ENCODE measurements at regions of chr10 and their contacts with region 1.

Region 1: DNA sequence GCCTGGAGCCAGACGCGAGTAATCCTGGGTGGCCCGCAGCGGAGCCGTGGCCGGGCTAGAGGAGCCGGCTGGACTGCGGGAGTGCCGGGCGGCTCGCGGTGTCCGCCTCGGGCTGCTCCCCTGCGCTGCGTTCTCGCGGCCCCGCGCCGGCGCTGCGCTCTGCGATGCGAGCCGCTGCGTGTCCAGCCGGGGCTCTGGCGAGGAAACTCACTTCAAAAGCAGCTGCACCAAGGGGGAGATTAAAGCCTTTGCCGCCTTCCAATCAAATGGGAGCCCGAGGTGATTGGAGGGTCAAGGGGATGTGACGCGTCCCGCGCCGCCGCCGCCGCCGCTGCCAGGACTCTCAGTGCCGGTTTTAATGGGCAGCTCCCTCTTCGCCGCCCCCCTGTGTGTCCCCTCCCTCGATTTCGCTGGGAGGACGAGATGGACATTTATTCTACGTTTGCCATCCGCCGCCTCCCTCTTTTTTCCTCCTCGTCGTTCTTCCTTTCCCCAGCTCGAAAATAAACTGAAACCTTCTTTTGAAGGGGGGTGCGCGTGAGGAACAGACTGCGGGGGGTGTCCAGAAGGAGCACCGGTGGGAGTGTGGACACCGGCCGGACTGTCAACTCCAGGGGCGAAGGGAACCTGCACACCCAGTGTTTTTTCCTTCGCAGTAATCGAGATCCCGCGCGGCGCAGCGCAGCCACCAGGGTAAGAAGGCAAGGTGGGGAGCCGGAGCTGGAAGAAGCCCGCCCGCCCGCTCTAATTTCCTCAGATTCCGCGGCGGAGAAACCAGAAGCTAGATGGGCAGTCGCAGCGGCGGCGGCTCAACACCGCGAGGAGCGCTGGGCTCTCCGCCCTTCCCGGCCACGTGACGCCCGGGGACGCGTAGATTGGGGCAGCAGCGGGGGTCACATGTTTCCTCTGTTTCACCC is at the start of gene ZNF503:
- DNase-seq: peak; percentile 99
- total RNA-seq, gene ZNF503: 27.9 to 36.0 TPM

Region 2: DNA sequence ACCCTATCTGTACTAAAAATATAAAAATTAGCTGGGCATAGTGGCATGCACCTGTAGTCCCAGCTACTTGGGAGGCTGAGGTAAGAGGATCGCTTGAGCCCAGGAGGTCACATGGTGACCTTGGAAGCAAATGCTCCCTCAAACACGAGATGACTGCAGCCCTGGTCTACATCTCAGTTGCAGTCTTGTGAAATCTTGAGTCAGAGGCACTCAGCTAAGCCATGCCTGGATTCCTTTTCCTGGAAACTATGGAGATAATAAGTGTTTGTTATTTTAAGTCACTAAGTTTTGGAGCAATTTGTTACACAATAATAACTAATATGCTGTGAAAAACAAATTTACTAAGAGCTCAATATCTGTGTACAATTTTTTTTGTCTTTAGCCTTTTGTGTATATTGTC is 859.8 kb before region 1 on chr10:
- intact Hi-C with region 1: no loop called
- DNase-seq: no peak

Region 3: GRCh38 chr10:75272896-75273295 is 128.9 kb before region 1 on chr10:
- intact Hi-C with region 1: no loop called
- DNase-seq: no peak

Region 4: DNA sequence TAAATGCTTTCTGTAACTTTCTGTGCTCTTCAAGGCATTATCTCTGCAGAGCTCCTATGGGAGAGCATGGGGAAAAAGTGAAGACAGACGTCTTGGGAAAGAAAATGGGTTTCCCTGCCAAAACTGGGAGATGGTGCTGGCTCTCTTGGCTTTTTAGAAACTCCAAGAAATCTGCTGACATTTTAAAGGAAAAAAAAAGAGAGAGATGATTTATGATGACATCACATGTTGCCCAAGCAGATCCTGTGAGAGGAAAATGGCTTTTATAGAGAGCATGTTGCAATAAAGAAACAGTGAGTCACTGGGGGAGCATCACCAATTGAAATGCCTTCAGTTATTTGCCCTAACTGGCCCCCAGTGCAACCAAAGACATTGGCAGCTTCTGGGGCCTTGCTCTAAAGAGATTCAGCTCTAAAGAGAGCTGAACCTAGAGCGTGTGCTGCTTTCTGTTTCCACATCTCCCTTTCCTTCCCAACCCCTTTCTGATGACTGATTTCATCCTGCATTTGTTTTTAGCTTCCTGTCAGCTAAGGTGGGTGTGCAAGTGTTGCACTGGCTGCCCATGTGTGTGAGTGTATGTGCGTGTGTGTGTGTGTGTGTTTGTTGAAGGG is 67.3 kb after region 1 on chr10:
- intact Hi-C with region 1: no loop called
- DNase-seq: no peak

Region 5: GRCh38 chr10:75651417-75651816 is 249.6 kb after region 1 on chr10:
- intact Hi-C with region 1: loop called (anchors 10 kb)
- DNase-seq: no peak

Region 6: DNA sequence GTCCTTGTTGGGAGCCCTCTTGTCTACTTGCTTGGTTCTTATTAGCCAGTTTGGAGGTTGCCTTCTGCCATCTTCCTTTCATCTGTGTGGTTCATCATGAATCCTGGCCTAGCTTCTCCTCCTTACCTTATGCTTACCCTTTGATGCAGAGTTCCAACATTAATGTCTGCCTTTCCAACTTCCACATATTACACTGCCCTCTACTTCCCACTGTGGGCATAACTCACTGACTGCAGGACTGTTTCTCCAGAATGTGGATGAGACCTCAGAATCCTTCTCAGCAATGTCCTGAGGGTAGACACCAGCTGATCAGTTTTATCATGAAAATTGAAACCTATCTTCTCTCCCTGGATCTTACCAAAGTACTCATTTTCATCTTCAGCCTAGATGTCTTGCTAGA is 520.6 kb after region 1 on chr10:
- intact Hi-C with region 1: loop called in 1 of 2 experiments (anchors 10 kb)
- DNase-seq: no peak

Region 7: DNA sequence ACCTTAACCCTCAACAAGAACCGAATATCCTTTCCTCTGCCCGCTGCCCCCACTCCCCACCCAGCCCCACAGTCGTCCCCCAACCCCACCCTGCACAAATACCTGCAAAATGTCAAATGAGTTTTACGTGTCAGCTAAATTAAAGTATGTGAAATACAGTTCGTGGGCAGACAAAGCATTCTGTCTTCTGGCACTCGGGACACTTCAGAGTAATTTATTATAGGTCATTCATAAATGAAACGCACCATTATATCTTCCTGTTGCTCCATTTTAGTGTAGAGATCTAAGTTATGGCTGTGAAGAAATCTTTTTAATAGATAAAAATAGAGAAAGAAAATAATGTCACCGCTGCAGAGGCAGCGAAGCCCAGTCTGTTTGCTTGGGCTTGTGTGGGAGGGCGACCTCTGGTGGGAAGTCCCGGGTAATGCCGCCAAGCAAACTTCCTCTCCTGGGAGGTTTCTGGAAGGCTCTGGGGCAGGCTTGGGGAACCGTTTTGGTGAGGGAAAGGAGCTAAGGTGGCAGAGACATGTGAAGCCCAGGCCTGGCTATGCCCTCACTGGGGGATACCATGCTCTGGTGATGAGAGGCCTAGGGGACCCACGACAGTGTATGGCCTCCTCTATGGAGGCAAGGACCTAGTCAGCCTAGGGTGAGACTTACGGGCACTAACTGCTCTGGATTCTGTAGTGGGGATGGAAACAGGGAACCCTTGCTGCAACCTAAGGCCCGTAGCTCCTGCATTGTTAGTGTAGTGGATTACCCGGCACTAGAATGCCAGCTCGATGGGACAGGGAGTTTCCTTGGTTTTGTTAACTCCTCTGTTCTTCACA is 634.5 kb after region 1 on chr10:
- intact Hi-C with region 1: loop called (anchors 2 to 5 kb)
- DNase-seq: peak; percentile 93

Region 8: DNA sequence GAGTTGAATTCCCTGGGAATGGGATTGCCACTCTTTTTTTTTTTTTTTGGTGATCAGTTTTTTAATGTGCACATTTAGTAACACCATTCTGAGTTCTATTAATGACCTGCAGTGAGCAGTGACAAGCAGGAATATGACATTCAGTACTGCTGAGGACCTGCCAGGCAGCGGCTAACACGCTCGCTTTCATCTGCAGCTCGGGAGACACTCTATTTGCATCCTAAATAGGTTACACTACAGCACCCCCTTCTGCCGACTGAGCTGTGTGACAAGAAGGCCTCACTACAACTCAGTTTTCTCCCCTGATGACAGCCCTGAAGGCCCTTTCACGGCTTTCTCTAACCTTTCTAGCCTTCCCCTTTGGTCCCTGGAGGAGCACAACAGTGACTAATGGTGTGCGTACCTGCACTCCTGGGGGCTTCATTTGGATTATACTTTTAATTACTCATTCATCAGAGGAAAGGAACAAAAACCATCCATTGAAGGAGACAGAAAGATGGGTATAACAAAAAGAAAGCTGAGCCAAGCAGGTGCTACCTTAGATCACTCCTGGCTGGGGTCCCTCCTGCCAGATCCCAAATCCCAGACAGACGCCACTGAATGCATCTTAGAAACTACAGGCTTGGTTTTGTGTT is 902.0 kb after region 1 on chr10:
- intact Hi-C with region 1: loop called (anchors 5 to 10 kb)
- DNase-seq: peak; percentile 86

Region 9: GRCh38 chr10:76547352-76547972 is 1145.6 kb after region 1 on chr10:
- intact Hi-C with region 1: loop called in 1 of 2 experiments (anchors 5 kb)
- DNase-seq: peak; percentile 88

Region 10: DNA sequence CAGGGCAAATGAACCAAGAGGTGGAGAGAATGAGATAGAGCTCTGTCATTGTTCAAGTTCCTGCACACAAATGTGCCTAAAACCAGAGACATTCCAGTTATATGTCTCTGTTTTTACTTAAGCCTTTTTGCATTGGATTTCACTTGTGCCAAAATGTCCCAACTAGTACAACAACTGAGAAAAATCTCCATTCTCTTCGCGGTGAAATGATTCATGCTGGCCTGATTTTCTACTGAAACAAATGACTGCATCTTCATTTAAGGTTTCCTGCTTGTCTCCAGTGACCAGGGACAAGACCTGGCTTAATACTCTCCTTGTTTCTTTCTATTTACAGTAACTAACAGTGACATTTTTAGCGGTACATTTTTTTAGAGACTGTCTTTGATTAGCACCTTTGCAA is 1520.8 kb after region 1 on chr10:
- intact Hi-C with region 1: loop called in 1 of 2 experiments (anchors 5 kb)
- DNase-seq: no peak